PC-3 (cell line): ENCODE measurements at regions of chr14 and their contacts with region 1.

Region 1: DNA sequence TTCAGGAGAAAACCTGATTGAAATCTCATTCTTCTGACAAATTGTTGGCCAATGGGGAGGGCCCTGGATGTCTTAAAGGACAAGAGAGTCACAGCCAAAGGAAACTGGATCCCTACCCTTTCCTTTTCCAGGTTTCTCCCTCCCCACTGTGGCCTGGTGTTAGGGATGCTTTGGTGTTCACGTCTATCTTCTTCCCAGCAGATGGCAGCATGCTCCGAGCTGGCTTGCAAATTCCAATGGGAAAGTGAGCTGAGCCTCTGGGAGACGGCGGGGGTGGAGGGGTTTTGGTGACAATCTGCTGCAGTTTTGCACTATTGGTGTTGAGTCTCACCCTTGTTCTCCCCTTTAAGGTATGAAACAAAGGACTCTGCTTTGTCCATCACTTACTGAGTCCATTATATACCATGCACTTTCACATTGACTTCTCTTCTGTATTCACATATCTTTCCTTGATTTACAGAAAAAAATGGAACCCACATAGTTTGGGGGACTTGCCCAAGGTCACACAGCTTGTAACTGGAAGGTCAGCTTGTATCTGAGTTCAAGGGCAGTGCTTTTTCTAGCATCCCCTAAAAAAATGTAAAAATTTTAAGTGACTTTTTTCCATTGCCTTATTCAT is 39.3 kb downstream of the CCDC177 start:
- DNase-seq: peak; percentile 71
- ATAC-seq: peak; percentile 79
- H3K4me3 ChIP-seq: no peak overlapping the region
- H3K27ac ChIP-seq: no peak overlapping the region
- H3K4me1 ChIP-seq: peaks cover 25% of the 10 kb centered on the region
- H3K27me3 ChIP-seq: peaks cover 4% of the 10 kb centered on the region; the same call in 1 of the 2 replicates
- CTCF ChIP-seq: peak; percentile 91

Region 2: DNA sequence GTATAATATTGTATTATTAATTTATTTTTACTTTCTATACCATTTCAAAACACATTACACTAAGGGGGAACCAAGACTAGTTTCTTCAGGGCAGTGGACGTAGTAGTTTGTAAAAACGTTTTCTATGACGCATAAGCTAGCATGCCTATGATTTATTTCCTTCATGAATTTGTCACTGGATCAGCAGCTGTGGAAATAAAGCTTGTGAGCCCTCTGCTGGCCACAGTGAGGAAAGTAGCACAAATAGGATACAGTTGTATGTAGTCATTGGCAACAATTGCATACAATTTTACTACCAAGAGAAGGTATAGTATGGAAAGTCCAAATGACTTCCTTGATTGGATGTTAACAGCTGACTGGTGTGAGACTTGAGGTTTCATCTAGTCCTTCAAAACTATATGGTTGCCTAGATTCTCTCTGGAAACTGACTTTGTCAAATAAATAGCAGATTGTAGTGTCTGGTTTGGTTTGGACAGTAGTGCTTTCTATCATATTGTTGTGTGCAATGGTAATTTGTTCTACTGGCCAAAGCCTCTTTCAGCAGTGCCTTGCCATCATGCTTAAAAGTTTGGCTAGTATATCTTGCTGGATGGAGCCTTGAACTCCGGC is 75.1 kb before region 1 on chr14:
- CTCF ChIA-PET with region 1: no interaction called
- POLR2A ChIA-PET with region 1: no interaction called
- intact Hi-C with region 1: no loop called
- DNase-seq: peak; percentile 91
- ATAC-seq: peak; percentile 46
- H3K4me3 ChIP-seq: no peak overlapping the region
- H3K27ac ChIP-seq: no peak overlapping the region
- H3K4me1 ChIP-seq: peaks cover 11% of the 10 kb centered on the region
- H3K27me3 ChIP-seq: no peaks in the 10 kb centered on the region
- CTCF ChIP-seq: peak; percentile 94

Region 3: DNA sequence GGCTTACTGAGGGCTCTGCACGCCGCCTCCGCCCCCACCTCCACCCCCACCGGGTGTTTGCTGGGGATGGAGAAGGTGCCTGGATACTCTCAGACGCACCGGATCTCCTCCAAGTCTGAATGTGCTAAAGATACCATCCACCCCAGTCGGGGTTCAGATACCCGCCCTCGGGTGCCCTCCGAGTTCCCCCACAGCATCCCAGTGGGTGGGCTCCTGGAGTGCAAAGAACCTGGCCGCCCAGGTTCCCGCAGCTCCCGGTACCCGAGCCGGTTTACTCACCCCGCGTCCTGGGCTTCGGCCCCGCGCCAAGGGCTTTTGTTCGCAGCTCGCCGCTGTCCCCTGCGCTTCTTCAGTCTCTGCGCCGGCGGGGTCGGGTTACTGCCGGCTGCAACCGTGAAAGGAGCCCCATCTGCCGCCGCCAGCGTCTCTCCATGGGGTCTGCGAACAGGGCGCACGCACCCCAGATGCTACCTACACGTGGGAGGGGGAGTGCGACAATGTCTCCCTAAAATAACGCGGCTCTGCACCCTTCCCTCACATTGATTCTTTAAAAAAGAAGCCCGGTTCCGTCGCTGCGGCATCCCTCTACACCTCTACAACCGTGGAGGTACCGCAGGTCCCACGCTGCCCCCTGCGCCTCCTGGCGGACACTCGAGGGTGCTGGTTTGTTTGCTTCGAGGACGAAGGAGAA is 39.1 kb after region 1 on chr14 and contains the start of gene CCDC177:
- CTCF ChIA-PET with region 1: interaction called, 18 read pairs
- POLR2A ChIA-PET with region 1: no interaction called
- intact Hi-C with region 1: loop called (anchors 1 kb)
- DNase-seq: peak; percentile 79
- ATAC-seq: peak; percentile 86
- H3K4me3 ChIP-seq: peak within 1 kb of the TSS; percentile 73
- H3K27ac ChIP-seq: no peak within 1 kb of the TSS
- H3K4me1 ChIP-seq: peaks cover 9% of the 10 kb centered on the region
- H3K27me3 ChIP-seq: peaks cover 55% of the 10 kb centered on the region
- CTCF ChIP-seq: peak; percentile 93
- total RNA-seq, gene CCDC177: not detected in 2 replicates

Region 4: GRCh38 chr14:69850086-69850735 is 314.9 kb after region 1 on chr14:
- CTCF ChIA-PET with region 1: no interaction called
- POLR2A ChIA-PET with region 1: no interaction called
- intact Hi-C with region 1: no loop called
- DNase-seq: no peak
- ATAC-seq: peak; percentile 48
- H3K4me3 ChIP-seq: no peak overlapping the region
- H3K27ac ChIP-seq: no peak overlapping the region
- H3K4me1 ChIP-seq: no peaks in the 10 kb centered on the region
- H3K27me3 ChIP-seq: peaks cover 93% of the 10 kb centered on the region
- CTCF ChIP-seq: no peak